Activated T-helper 2 cell treated with anti-CD3 and anti-CD28 coated beads, Interferon-gamma antibody, Interleukin-2, Interleukin-4, amounts not matched to agents 10 μg/mL and 5 μg/mL and 100 μg/mL, durations not matched to agents 14 hours and 24 hours and 36 hours (primary cell): ENCODE measurements at regions of chr15 and their contacts with region 1.

Region 1: DNA sequence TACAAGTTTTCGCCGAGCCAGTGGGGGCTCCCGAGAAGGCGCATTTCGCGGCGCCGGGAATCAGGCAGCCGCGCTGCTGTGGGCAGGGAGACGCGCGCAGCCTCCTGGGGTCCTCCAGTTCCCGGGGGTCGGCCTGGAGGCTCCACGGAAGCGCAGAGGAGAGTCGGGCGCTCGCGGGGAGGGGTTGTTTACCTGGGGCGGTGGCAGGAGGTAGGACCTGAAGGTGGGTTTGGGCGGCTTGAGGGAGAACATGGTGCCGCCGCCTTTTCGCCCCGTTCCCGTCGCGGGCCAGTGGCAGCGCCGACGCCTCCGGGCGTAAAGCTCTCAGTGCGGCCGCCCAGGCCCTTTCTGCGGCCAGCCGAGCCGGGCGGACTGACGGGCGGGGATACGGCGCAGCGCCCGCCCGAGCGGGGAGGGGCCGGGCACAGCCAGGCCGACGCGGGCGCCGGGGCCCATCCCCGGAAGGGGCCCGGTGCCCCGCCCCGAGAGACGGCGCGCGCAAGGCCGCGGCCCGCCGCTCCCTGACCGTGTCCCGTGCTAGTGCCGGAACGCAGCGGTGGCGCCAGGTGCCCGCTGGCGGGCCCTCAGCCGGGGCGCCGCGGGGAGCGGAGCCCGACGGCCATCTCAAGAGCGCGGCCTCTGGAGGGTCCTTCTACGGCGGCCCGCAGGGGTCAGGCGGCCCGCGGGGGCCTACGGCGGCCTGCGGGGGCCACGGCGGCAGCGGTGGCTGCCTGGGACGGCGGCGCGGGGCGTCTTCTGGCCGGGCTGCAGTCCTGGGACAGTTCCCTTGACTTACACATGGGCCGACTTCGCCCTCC is at the start of gene MTMR10:
- DNase-seq: peak; percentile 75
- H3K4me3 Mint-ChIP-seq: peak within 1 kb of the TSS; percentile 90
- H3K27ac Mint-ChIP-seq: peak within 1 kb of the TSS; percentile 83
- H3K4me1 Mint-ChIP-seq: peaks cover 19% of the 10 kb centered on the region
- H3K27me3 Mint-ChIP-seq: peaks cover 10% of the 10 kb centered on the region
- total RNA-seq, gene MTMR10: 12.2 and 14.1 TPM in 2 replicates

Region 2: GRCh38 chr15:30791239-30792175 is 200.0 kb before region 1 on chr15:
- intact Hi-C with region 1: no loop called
- DNase-seq: no peak
- H3K4me3 Mint-ChIP-seq: no peak overlapping the region
- H3K27ac Mint-ChIP-seq: no peak overlapping the region
- H3K4me1 Mint-ChIP-seq: no peaks in the 10 kb centered on the region
- H3K27me3 Mint-ChIP-seq: peaks cover 14% of the 10 kb centered on the region

Region 3: DNA sequence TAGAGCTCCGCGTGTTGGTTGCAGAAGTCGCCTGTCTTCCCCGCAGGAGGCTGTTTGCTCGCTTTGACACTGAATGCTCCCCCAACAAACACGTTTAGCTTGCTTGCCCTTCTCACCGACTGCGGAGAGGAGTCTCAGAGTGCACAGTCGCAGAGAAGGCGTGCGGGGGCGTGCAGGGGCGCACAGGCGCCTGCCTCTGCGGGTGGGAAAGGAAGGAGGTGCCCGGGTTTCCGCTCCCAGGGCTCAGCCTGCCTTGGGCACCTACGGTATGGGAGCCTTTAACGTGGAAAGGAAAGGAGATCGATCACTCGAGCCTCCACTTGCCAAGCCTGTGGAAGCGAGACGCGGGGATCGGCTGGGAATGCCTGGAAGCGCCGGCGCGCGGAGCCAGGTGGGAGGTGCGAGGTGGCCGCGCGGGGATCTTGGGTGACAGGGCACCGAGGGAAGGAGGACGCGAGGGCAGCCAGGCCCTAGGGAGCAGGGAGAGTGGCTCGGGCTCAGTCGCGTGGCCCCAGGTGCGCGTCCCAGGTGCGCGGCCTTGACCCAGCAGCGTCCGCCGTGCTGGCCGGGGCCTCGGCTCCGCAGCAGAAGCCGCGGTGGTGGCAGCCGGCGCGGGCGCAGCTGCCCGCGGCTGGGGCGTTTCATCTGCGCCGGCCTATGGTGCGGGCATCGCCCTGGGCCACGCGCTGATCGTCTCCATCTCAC is 87.8 kb before region 1 on chr15 and contains the start of gene FAN1:
- intact Hi-C with region 1: loop called (anchors 5 kb)
- DNase-seq: peak; percentile 62
- H3K4me3 Mint-ChIP-seq: peak within 1 kb of the TSS; percentile 94
- H3K27ac Mint-ChIP-seq: peak within 1 kb of the TSS; percentile 75
- H3K4me1 Mint-ChIP-seq: peaks cover 22% of the 10 kb centered on the region
- H3K27me3 Mint-ChIP-seq: no peaks in the 10 kb centered on the region
- total RNA-seq, gene FAN1: 20.9 and 24.8 TPM in 2 replicates

Region 4: DNA sequence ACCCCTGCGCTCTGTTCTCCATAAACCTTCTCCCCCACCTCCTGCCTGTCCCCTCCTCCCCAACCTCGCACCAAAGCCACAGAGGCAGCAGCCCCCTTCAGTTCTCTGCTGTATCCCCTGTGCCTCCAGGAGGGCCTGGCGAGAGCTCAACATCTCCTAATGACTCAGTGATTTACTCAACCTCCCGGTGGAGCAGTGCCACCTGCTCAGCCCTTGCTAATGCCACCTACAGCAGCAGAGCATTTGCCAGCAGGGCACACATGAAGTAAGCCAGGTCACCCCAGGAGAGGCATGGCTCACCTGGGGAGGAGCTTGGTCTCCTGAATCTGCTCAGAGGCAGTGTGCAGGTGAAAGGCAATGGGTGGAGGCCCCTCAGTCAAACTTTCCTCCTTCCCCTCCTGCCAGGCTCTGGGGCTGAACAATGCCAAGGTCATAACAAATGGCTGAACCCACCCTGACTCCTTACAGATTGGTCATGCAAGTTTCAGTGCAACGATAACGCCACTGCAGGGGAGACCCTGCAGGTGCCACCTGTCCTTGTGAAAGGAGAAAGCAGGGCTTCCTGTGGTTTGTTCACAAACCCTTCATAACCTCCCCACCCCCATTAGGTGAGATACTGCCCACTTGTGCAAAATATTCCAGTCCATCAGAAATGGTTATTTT is 90.3 kb after region 1 on chr15:
- intact Hi-C with region 1: no loop called
- DNase-seq: no peak
- H3K4me3 Mint-ChIP-seq: peak overlapping the region; percentile 1
- H3K27ac Mint-ChIP-seq: no peak overlapping the region
- H3K4me1 Mint-ChIP-seq: no peaks in the 10 kb centered on the region
- H3K27me3 Mint-ChIP-seq: peaks cover 24% of the 10 kb centered on the region